ENCODE measurements at regions of chr2 and their contacts with region 1.

Region 1: DNA sequence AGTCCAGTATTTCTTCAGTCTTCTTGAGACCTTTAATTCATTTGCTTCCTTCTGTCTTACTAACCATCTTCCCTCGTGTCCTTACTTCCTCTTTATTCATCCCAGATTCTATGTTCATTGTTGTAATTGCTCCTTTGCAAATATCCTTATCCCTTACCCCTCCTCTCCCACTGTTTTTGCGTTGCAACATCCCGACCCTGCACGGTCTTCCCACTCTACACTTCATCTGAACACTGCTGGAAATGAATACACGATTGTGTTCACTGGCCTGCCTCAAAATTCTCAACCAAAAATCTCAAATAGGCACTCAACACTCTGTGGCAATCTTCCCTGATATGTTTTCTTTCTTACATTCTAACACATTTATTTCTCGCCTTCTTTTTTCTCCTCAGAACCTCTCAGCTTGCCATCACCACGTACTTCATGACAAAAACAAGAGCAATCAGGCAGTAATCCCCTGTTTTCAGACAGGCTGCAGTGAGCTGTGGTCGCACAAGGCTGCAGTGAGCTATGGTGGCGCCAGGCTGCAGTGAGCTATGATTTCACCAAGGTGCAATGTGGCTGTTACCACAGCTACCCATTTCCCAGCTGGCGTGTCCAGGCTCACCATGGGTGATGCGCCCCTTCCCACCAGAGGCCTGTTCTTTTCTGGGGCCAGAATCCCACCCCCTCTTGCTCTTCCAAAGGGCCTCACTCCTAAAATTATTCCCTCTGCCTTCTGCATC is 25.7 kb downstream of the TCF23 start:
- DNase-seq: no peak
- H3K4me3 ChIP-seq: no peak overlapping the region
- H3K27ac ChIP-seq: no peak overlapping the region
- H3K4me1 ChIP-seq: peaks cover 0 to 15% (median 8%) of the 10 kb centered on the region in 4 donors
- H3K27me3 ChIP-seq: peaks cover 15% of the 10 kb centered on the region
- CTCF ChIP-seq: no peak
- EP300 ChIP-seq: no peak
- POLR2A ChIP-seq: no peak

Region 2: GRCh38 chr2:26959331-26959730 is 215.1 kb before region 1 on chr2:
- in situ Hi-C with region 1: no loop called
- intact Hi-C with region 1: no loop called
- DNase-seq: no peak
- H3K4me3 ChIP-seq: no peak overlapping the region
- H3K27ac ChIP-seq: no peak overlapping the region
- H3K4me1 ChIP-seq: peaks cover 0 to 5% (median 3%) of the 10 kb centered on the region in 4 donors
- H3K27me3 ChIP-seq: peaks cover 34% of the 10 kb centered on the region
- CTCF ChIP-seq: no peak
- EP300 ChIP-seq: no peak
- POLR2A ChIP-seq: no peak

Region 3: GRCh38 chr2:27308359-27308881 is 133.9 kb after region 1 on chr2 and contains the start of gene UCN:
- in situ Hi-C with region 1: no loop called
- intact Hi-C with region 1: loop called (anchors 5 kb)
- DNase-seq: no peak
- H3K4me3 ChIP-seq: no peak within 1 kb of the TSS
- H3K27ac ChIP-seq: no peak within 1 kb of the TSS
- H3K4me1 ChIP-seq: peaks cover 0 to 22% (median 17%) of the 10 kb centered on the region in 4 donors
- H3K27me3 ChIP-seq: peaks cover 47% of the 10 kb centered on the region
- CTCF ChIP-seq: no peak
- EP300 ChIP-seq: no peak
- POLR2A ChIP-seq: no peak
- total RNA-seq, gene UCN: 0.82 to 10.8 (median 2.2) TPM in 3 of 4 donors, not detected in the other

Measured in transverse colon (tissue), 4 donors.